PC-3 (cell line): ENCODE measurements at regions of chr1 and their contacts with region 1.

Region 1: GRCh38 chr1:118077331-118078055 is 107.5 kb downstream of the SPAG17 start:
- DNase-seq: peak; percentile 68
- ATAC-seq: peak; percentile 18; the same call in 1 of the 2 replicates
- H3K4me3 ChIP-seq: no peak overlapping the region
- H3K27ac ChIP-seq: no peak overlapping the region
- H3K4me1 ChIP-seq: no peaks in the 10 kb centered on the region
- H3K27me3 ChIP-seq: no peaks in the 10 kb centered on the region
- CTCF ChIP-seq: peak; percentile 87

Region 2: GRCh38 chr1:118151312-118151937 is 73.9 kb after region 1 on chr1:
- CTCF ChIA-PET with region 1: no interaction called
- POLR2A ChIA-PET with region 1: no interaction called
- intact Hi-C with region 1: loop called (anchors 2 kb)
- DNase-seq: peak; percentile 79
- ATAC-seq: no peak
- H3K4me3 ChIP-seq: no peak overlapping the region
- H3K27ac ChIP-seq: no peak overlapping the region
- H3K4me1 ChIP-seq: peaks cover 17% of the 10 kb centered on the region; the same call in 1 of the 2 replicates
- H3K27me3 ChIP-seq: no peaks in the 10 kb centered on the region
- CTCF ChIP-seq: peak; percentile 90

Region 3: DNA sequence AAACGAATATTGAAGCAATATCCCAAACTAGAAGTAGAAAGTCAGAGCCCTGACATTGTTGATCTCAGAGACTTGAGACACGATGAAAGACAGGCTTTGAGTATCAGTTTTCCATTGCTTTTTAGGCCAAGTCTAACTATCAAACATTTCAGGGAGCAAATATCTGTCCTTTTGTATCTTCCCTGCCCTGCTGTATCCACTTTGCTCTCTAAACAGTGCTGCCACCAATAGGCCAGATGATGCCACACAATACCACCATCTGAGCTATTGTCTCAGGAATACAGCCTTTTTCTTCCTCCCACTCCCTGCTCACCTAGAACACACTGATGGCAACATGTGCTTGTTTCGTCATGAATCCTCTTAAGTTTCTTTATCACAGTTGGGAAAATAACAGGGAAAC is 170.1 kb after region 1 on chr1:
- CTCF ChIA-PET with region 1: no interaction called
- POLR2A ChIA-PET with region 1: no interaction called
- intact Hi-C with region 1: loop called (anchors 1 kb)
- DNase-seq: peak; percentile 47
- ATAC-seq: peak; percentile 45; the same call in 1 of the 2 replicates
- H3K4me3 ChIP-seq: no peak overlapping the region
- H3K27ac ChIP-seq: no peak overlapping the region
- H3K4me1 ChIP-seq: no peaks in the 10 kb centered on the region
- H3K27me3 ChIP-seq: peaks cover 37% of the 10 kb centered on the region; the same call in 1 of the 2 replicates
- CTCF ChIP-seq: peak; percentile 64

Region 4: DNA sequence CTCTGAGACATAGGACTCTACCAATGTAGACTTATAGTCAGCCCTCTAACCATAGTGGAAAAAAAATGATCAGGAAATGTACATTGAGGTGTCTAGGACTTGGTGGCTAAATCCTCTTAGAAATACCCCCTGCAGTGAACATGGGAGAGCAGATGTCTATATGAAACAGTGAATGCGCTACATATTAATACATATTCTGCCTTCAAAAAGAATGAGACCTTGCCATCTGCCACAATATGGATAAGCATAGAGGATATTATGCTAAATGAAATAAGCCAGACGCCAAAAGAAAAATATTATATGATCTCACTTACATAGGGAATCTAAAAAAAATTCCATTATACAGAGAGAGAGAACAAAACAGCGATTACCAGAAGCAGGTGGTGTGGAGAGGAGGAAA is 1224.5 kb after region 1 on chr1:
- CTCF ChIA-PET with region 1: no interaction called
- POLR2A ChIA-PET with region 1: no interaction called
- intact Hi-C with region 1: loop called (anchors 5 kb)
- DNase-seq: no peak
- ATAC-seq: no peak
- H3K4me3 ChIP-seq: no peak overlapping the region
- H3K27ac ChIP-seq: no peak overlapping the region
- H3K4me1 ChIP-seq: no peaks in the 10 kb centered on the region
- H3K27me3 ChIP-seq: peaks cover 72% of the 10 kb centered on the region
- CTCF ChIP-seq: no peak

Region 5: DNA sequence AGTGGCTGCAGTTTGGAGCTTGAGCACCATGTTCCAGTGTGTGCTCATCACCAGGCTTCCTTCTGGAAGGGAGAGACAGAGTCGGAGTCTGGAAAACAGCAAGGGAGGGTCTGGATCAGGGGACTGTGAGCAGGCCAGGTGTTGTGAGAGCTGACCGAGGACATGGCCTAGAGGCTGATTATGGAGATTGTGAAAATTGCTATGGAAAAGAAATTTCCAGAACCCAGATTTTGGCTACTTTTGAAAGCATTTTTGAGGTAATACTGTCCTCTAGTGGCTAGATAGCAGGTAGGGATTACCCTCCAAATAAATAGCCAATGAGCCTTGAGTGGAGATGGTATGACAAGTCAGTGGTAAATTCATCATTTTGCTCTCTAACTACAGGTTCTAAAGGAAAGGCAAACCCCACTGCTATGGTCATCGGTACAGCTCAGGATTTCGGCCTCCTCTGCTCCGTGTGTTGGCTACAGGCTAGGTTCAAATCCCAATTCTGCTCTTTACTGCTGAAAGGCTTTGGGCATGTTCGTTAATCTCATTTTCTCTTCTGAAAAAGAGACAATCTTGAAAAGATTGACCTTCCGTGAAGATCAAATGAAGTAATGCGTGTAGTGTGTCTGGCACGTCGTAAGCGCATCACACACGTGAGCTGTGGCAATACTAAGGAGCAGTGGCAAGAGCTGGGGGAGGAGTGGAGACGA is 1290.1 kb after region 1 on chr1:
- CTCF ChIA-PET with region 1: no interaction called
- POLR2A ChIA-PET with region 1: no interaction called
- intact Hi-C with region 1: loop called (anchors 1 kb)
- DNase-seq: peak; percentile 74
- ATAC-seq: peak; percentile 62
- H3K4me3 ChIP-seq: no peak overlapping the region
- H3K27ac ChIP-seq: no peak overlapping the region
- H3K4me1 ChIP-seq: peaks cover 8% of the 10 kb centered on the region; the same call in 1 of the 2 replicates
- H3K27me3 ChIP-seq: peaks cover 15% of the 10 kb centered on the region
- CTCF ChIP-seq: peak; percentile 97